ENCODE measurements at regions of chr13 and their contacts with region 1.

Region 1: GRCh38 chr13:75325711-75326110 is 156.3 kb downstream of the TBC1D4 start:
- DNase-seq: no peak
- ATAC-seq: no peak
- H3K4me3 ChIP-seq: no peak overlapping the region
- H3K27ac ChIP-seq: no peak overlapping the region
- H3K4me1 ChIP-seq: peaks cover 5% of the 10 kb centered on the region
- H3K27me3 ChIP-seq: no peaks in the 10 kb centered on the region
- CTCF ChIP-seq: no peak
- POLR2A ChIP-seq: no peak
- RAD21 ChIP-seq: no peak

Region 2: DNA sequence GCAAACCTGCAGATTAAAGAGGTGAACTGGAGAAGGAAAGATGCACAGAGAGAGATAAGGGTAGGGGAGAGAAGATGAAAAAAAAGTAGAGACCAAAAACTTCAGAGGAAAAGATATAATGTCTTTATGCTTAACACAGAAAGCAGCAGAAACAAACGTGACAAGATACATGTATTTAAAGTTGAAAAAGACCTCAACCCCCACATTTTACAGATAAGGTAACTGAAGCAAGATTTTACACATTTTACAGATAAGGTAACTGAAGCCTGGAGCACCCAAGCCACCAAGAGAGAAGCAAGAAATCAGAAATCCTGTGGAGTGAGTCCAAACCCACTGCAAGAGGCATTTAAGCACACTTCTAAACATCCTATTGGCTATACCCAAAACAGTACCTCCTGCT is 29.1 kb before region 1 on chr13:
- CTCF ChIA-PET with region 1: no interaction called
- POLR2A ChIA-PET with region 1: no interaction called
- dilution Hi-C with region 1: no loop called
- in situ Hi-C with region 1: no loop called
- intact Hi-C with region 1: loop called (anchors 1 kb)
- DNase-seq: no peak
- ATAC-seq: no peak
- H3K4me3 ChIP-seq: no peak overlapping the region
- H3K27ac ChIP-seq: no peak overlapping the region
- H3K4me1 ChIP-seq: no peaks in the 10 kb centered on the region
- H3K27me3 ChIP-seq: no peaks in the 10 kb centered on the region
- CTCF ChIP-seq: no peak
- POLR2A ChIP-seq: no peak
- RAD21 ChIP-seq: no peak

Region 3: DNA sequence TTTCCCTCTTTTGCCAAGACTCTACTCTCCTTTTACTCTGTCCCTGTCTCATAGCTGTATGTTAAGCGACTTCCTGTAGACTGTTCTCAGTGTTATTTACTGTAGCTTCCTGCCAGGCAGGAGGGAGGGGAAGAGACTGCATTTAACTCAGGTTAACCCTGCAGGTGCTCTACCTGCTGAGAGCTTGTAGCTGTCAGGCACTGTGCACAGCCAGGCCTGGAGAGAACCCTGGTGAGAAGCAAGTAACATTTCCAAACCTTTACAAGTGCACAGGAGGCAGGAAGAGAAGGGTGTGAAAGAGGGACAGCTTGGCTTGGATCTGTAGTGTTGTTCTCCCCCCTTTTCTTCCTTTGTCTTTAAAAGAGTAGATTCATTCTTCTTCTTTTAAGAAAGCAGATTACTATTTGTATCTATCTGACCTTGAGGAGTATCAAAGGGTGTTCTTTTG is 477.5 kb after region 1 on chr13:
- CTCF ChIA-PET with region 1: no interaction called
- POLR2A ChIA-PET with region 1: no interaction called
- dilution Hi-C with region 1: no loop called
- in situ Hi-C with region 1: no loop called
- intact Hi-C with region 1: no loop called
- DNase-seq: no peak
- ATAC-seq: no peak
- H3K4me3 ChIP-seq: no peak overlapping the region
- H3K27ac ChIP-seq: peak overlapping the region; percentile 68; the same call in 1 of the 2 replicates
- H3K4me1 ChIP-seq: peaks cover 10% of the 10 kb centered on the region
- H3K27me3 ChIP-seq: no peaks in the 10 kb centered on the region
- CTCF ChIP-seq: no peak
- POLR2A ChIP-seq: no peak
- RAD21 ChIP-seq: no peak

Measured in IMR-90 (cell line).